ENCODE measurements at regions of chr15 and their contacts with region 1.

Region 1: GRCh38 chr15:75036314-75036649 is 12.9 kb downstream of the PPCDC start:
- DNase-seq: no peak
- CTCF ChIP-seq: no peak

Region 2: GRCh38 chr15:75104804-75105535 is 68.7 kb after region 1 on chr15:
- CTCF ChIA-PET with region 1: interaction called, 52 read pairs
- POLR2A ChIA-PET with region 1: interaction called, 10 read pairs
- DNase-seq: peak; percentile 83
- CTCF ChIP-seq: no peak